ENCODE measurements at regions of chr11 and their contacts with region 1.

Region 1: GRCh38 chr11:7904914-7905313 is 26.2 kb downstream of the OR10A6 start:
- DNase-seq: no peak
- H3K4me3 ChIP-seq: no peak overlapping the region
- H3K27ac ChIP-seq: no peak overlapping the region
- H3K4me1 ChIP-seq: no peaks in the 10 kb centered on the region
- H3K27me3 ChIP-seq: no peaks in the 10 kb centered on the region
- CTCF ChIP-seq: no peak

Region 2: GRCh38 chr11:7749456-7749855 is 155.5 kb before region 1 on chr11:
- intact Hi-C with region 1: no loop called
- DNase-seq: no peak
- H3K4me3 ChIP-seq: no peak overlapping the region
- H3K27ac ChIP-seq: no peak overlapping the region
- H3K4me1 ChIP-seq: no peaks in the 10 kb centered on the region
- H3K27me3 ChIP-seq: no peaks in the 10 kb centered on the region
- CTCF ChIP-seq: no peak

Region 3: DNA sequence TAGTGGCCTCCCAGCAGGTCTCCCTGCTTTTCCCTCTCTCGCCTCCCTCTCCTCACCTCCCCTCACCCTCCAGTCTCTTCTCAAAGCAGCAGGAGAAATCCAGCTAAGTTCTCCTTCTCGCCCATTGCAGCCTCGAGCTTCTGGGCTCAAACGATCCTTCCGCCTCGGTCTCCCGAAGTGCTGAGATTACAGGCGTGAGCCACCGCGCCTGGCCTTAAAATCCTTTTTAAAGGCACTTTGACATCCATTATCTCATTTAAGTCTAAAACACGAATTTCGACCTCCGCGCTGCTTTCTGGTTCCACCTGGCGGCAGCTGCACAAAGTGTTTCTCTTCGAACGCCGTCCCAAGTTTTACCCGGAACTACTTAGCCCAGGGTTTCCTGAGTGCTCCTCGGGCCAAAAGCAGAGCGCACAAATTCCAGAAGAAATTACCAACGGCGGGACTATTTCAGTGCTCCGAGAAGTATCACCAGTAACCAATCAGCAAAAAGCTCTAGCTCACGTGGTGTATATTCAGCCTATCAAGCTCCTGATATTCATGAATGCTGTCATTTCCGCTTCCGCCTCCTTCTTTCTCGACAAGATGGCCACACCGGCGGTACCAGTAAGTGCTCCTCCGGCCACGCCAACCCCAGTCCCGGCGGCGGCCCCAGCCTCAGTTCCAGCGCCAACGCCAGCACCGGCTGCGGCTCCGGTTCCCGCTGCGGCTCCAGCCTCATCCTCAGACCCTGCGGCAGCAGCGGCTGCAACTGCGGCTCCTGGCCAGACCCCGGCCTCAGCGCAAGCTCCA is 82.0 kb after region 1 on chr11 and contains the start of gene EIF3F:
- intact Hi-C with region 1: loop called (anchors 5 kb)
- DNase-seq: peak; percentile 94 to 95
- H3K4me3 ChIP-seq: peak within 1 kb of the TSS; percentile 85 to 91
- H3K27ac ChIP-seq: peak within 1 kb of the TSS; percentile 65 to 81
- H3K4me1 ChIP-seq: peaks cover 0 to 38% (median 22%) of the 10 kb centered on the region in 4 donors
- H3K27me3 ChIP-seq: no peaks in the 10 kb centered on the region
- CTCF ChIP-seq: peak; percentile 80 to 89